Activated CD4-positive, alpha-beta T cell treated with anti-CD3 and anti-CD28 coated beads, Interleukin-2, amount 10 ng/mL, durations not matched to agents 24 days and 14 days (primary cell): ENCODE measurements at regions of chr3 and their contacts with region 1.

Region 1: GRCh38 chr3:4517643-4518311 is 24.6 kb downstream of the ITPR1 start:
- DNase-seq: no peak
- H3K4me3 Mint-ChIP-seq: no peak overlapping the region
- H3K27ac Mint-ChIP-seq: peak overlapping the region; percentile 64
- H3K4me1 Mint-ChIP-seq: peaks cover 30% of the 10 kb centered on the region
- H3K27me3 Mint-ChIP-seq: no peaks in the 10 kb centered on the region

Region 2: GRCh38 chr3:4584456-4585249 is 66.9 kb after region 1 on chr3:
- intact Hi-C with region 1: loop called (anchors 5 kb)
- DNase-seq: peak; percentile 73
- H3K4me3 Mint-ChIP-seq: peak overlapping the region; percentile 82
- H3K27ac Mint-ChIP-seq: peak overlapping the region; percentile 68
- H3K4me1 Mint-ChIP-seq: peaks cover 32% of the 10 kb centered on the region
- H3K27me3 Mint-ChIP-seq: no peaks in the 10 kb centered on the region

Region 3: GRCh38 chr3:4633078-4634004 is 115.6 kb after region 1 on chr3:
- intact Hi-C with region 1: loop called (anchors 5 kb)
- DNase-seq: peak; percentile 71
- H3K4me3 Mint-ChIP-seq: no peak overlapping the region
- H3K27ac Mint-ChIP-seq: no peak overlapping the region
- H3K4me1 Mint-ChIP-seq: peaks cover 5% of the 10 kb centered on the region
- H3K27me3 Mint-ChIP-seq: no peaks in the 10 kb centered on the region